ENCODE measurements at regions of chr11 and their contacts with region 1.

Region 1: DNA sequence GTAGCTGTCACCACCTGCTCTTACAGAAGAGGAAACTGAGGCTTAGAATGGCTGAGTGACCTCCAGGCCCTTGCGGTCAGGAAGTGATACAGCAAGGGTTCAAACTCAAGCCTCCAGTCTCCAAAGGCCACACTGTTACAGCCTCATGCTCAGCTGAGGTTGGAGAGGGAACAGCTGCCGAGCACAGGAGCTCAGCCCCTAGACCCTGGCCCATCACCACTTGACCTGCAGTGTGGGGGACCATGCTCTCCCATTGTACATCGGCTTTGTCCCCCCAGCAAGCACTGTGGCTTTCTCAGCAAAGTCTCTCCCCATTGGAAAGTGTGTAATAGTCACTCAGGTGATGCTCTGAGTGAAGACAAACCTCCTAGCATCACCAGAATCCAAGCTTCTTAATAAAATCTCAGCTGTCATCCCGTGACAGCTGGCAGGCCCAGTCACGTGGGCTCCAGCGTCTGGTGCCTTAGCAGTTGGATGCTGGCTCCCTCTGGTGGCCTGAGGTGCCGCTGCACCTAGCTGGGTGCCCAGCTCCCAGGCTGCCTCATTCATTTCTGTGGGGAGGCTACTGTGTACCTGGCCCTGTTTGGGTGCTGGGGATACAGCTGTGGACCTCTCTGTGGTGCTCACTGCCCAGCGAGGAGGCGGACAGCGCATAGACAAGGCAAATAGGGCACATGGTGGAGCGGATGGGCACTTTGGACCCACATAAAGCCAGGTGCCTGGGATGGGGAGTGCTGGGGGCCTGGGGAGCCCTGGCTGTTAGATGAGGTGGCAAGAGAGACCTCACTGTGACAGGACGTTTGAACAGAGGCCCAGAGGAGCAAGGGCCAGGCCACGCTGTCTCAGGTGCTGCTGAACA is 19.1 kb upstream of the MYRF start:
- DNase-seq: peak in 1 of 2 experiments; percentile 89
- H3K4me3 ChIP-seq: no peak overlapping the region
- H3K27ac ChIP-seq: no peak overlapping the region
- H3K4me1 ChIP-seq: no peaks in the 10 kb centered on the region
- H3K27me3 ChIP-seq: no peaks in the 10 kb centered on the region
- CTCF ChIP-seq: peak in 2 of 3 experiments; percentile 96 to 99; a peak in 3 of 4 replicates
- EP300 ChIP-seq: no peak
- POLR2A ChIP-seq: no peak
- RAD21 ChIP-seq: peak; percentile 94 to 97

Region 2: DNA sequence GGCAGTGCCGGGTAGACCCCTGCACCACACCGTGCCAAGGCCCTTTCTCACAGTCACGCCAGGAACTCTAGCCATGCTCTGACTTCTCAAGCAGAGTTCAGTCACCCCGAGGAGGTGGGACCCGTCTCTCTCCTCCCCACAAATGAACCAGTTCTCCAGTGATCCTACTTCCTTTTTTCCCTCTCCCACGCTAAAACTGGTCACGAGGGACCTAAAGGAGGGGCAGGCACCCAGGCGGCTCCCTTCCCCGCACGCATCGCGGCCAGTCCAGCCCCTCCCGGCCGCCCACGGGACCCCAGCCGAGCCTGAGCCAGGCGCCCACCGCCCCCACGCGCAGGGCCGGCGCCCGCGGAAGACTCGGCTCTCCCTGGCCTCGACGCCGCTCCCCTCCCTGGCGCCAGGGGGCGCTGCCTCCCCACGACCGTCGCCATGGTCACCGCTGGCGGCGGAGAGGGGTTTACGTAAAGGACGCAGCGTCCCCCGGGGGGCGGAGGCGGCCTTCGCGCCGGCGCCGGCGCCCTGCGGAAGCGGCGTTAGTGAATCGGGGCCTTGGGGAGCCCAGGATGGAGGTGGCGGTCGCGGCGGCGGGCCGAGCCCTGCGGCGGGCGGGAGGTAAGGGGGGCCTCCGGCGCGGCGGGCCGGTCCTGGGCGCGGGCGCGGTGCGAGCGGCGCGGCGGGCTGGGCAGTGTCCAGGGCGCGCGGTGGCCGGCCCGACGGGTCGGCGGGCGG is 53.3 kb before region 1 on chr11 and contains the start of gene DAGLA:
- CTCF ChIA-PET with region 1: interaction called, 37 read pairs
- POLR2A ChIA-PET with region 1: no interaction called
- DNase-seq: peak in 1 of 2 experiments; percentile 90
- H3K4me3 ChIP-seq: peak within 1 kb of the TSS; percentile 6 to 50 (median 26)
- H3K27ac ChIP-seq: no peak within 1 kb of the TSS
- H3K4me1 ChIP-seq: peaks cover 0 to 12% (median 4%) of the 10 kb centered on the region in 4 experiments; a peak in 5 of 7 replicates
- H3K27me3 ChIP-seq: peaks cover 0 to 19% (median 12%) of the 10 kb centered on the region in 4 experiments; a peak in 5 of 7 replicates
- CTCF ChIP-seq: peak; percentile 86 to 99 (median 87)
- EP300 ChIP-seq: 0 out of 3 replicates have a peak, but pooled peaks of 1 of the 2 experiments have one; percentile 3
- POLR2A ChIP-seq: no peak
- RAD21 ChIP-seq: peak; percentile 53 to 71
- total RNA-seq, gene DAGLA: 6.4 and 6.6 TPM in 2 replicates

Region 3: GRCh38 chr11:61695917-61696316 is 37.4 kb before region 1 on chr11:
- CTCF ChIA-PET with region 1: interaction called, 22 read pairs
- POLR2A ChIA-PET with region 1: interaction called, 3 read pairs
- DNase-seq: peak in 1 of 2 experiments; percentile 63
- H3K4me3 ChIP-seq: no peak overlapping the region
- H3K27ac ChIP-seq: no peak overlapping the region
- H3K4me1 ChIP-seq: peaks cover 9 to 38% (median 29%) of the 10 kb centered on the region in 4 experiments
- H3K27me3 ChIP-seq: peaks cover 0 to 3% (median 1%) of the 10 kb centered on the region in 4 experiments; a peak in 1 of 7 replicates
- CTCF ChIP-seq: 0 out of 4 replicates have a peak, but pooled peaks of 1 of the 3 experiments have one; percentile 17
- EP300 ChIP-seq: no peak
- POLR2A ChIP-seq: no peak
- RAD21 ChIP-seq: peak in 1 of 2 experiments; percentile 17; a peak in 1 of 4 replicates

Region 4: DNA sequence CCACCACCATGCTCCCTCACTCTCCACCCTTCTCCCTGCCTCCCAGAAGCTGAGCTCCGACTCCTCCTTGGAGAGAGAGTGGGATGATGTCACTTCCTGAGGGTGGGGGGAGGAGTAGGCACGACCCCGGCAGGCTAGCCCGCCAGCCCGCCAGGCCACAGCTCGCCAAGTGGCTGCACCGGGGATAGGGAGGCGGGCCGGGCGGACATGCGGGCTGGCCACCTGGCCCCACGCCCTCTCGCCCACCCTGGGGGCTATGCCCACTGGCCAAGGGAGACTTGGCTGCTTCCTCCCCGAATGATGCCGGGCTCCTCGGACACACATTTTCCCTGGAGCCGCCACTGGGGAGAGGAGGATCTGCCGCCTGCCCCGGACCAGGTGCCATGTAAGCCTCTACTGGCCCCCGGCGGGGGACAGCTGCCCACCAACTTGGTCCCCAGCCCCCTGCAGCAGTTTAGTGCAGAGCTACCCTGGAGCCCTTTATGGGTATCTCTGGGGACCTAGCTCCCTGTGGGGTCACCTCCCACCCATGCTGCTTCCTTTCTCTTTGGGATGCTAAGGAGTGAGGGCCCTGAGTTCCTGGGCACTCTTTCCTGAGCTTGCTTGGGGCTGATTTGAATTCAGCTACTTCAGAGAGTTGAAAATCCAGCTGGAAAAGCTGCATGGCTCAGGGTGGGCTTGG is 14.6 kb before region 1 on chr11:
- CTCF ChIA-PET with region 1: interaction called, 127 read pairs
- POLR2A ChIA-PET with region 1: interaction called, 4 read pairs
- DNase-seq: peak in 1 of 2 experiments; percentile 87
- H3K4me3 ChIP-seq: peak overlapping the region; percentile 18 to 62 (median 32); a peak in 7 of 8 replicates
- H3K27ac ChIP-seq: no peak overlapping the region; the same call in 1 of the 2 replicates
- H3K4me1 ChIP-seq: peaks cover 0 to 34% (median 23%) of the 10 kb centered on the region in 4 experiments; a peak in 6 of 7 replicates
- H3K27me3 ChIP-seq: no peaks in the 10 kb centered on the region
- CTCF ChIP-seq: no peak
- EP300 ChIP-seq: no peak
- POLR2A ChIP-seq: peak in 1 of 2 experiments; percentile 68; a peak in 2 of 3 replicates
- RAD21 ChIP-seq: no peak

Region 5: DNA sequence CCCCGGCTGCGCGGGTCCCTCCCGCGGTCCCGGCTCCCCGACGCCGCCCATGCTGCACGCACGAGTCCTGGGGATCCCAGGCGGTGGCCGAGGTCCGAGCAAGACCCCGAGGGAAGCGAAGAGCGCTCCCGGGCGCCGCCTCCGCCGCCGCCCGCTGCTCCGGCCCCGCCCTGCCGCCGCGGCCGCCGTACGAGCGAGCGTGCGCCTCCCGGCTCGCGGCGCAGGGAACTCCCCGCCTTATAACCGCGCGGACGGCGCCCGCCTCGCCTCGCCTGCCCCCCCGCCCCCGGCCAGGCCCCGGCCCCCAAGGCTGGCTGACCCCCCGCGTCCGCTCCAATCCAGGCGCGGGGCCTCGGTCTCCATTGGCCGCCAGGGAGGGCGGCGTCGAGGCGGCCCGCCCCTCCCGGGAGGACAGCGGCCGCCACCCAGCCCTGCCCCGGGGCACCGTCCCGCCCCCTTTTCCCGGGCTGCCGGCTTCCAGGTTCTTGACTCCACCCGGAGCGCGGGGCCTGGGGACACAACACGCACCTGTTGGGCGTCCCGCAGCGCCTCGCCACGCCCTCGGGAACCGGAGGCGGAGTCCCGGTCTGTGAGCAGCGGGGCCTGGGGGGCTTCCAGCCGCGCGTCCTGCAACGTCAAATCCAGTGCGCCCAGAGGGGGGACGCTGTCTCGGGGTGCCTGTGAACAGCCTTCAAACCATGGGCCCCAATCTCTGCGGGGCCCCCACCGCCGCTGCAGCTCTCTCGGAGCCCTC is 158.2 kb after region 1 on chr11 and contains the start of gene FADS3:
- CTCF ChIA-PET with region 1: no interaction called
- POLR2A ChIA-PET with region 1: no interaction called
- DNase-seq: peak; percentile 73 to 93
- H3K4me3 ChIP-seq: peak within 1 kb of the TSS; percentile 69 to 81 (median 74)
- H3K27ac ChIP-seq: no peak within 1 kb of the TSS
- H3K4me1 ChIP-seq: peaks cover 0 to 11% (median 8%) of the 10 kb centered on the region in 4 experiments; a peak in 6 of 7 replicates
- H3K27me3 ChIP-seq: no peaks in the 10 kb centered on the region
- CTCF ChIP-seq: no peak
- EP300 ChIP-seq: no peak
- POLR2A ChIP-seq: no peak; a peak in 1 of 3 replicates
- RAD21 ChIP-seq: no peak
- total RNA-seq, gene FADS3: 40.2 and 43.8 TPM in 2 replicates

Region 6: GRCh38 chr11:61999141-61999975 is 266.0 kb after region 1 on chr11:
- CTCF ChIA-PET with region 1: no interaction called
- POLR2A ChIA-PET with region 1: no interaction called
- DNase-seq: no peak
- H3K4me3 ChIP-seq: peak overlapping the region in 1 of 4 experiments; percentile 22; a peak in 2 of 8 replicates
- H3K27ac ChIP-seq: peak overlapping the region; percentile 92
- H3K4me1 ChIP-seq: peaks cover 0 to 19% (median 6%) of the 10 kb centered on the region in 4 experiments; a peak in 6 of 7 replicates
- H3K27me3 ChIP-seq: no peaks in the 10 kb centered on the region
- CTCF ChIP-seq: no peak
- EP300 ChIP-seq: no peak
- POLR2A ChIP-seq: no peak; a peak in 2 of 3 replicates
- RAD21 ChIP-seq: no peak

Region 7: GRCh38 chr11:62013591-62014476 is 280.5 kb after region 1 on chr11:
- CTCF ChIA-PET with region 1: no interaction called
- POLR2A ChIA-PET with region 1: no interaction called
- DNase-seq: no peak
- H3K4me3 ChIP-seq: no peak overlapping the region; a peak in 1 of 8 replicates
- H3K27ac ChIP-seq: no peak overlapping the region
- H3K4me1 ChIP-seq: peaks cover 0 to 3% (median 0%) of the 10 kb centered on the region in 4 experiments; a peak in 1 of 7 replicates
- H3K27me3 ChIP-seq: no peaks in the 10 kb centered on the region
- CTCF ChIP-seq: no peak
- EP300 ChIP-seq: no peak
- POLR2A ChIP-seq: no peak
- RAD21 ChIP-seq: no peak